ENCODE measurements at regions of chr21 and their contacts with region 1.

Region 1: DNA sequence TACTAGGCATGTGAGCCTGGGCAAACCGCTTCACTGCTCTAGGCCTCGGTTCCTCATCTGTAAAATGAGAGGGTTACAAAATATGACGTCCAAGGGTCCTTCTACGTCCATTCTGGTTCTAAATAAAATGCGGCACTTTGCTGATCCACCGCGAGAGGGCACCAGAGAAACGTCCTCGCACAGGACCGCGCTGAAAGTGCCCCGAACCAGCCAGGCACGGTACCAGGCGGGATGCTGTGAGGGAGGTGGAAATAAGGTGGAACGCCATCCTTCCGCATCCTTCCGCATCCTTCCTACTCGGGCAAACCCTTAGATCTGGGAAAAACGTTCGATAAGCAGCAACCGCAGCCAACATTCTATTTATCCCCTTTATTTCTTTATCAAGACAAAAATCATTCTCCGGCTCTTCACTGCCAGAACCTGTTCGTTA is 60.3 kb upstream of the KRTAP19-8 start:
- DNase-seq: peak; percentile 64 to 68 (median 64)
- H3K4me3 ChIP-seq: no peak overlapping the region
- H3K4me3 Mint-ChIP-seq: peak overlapping the region; percentile 56 to 82 (median 72)
- H3K27ac ChIP-seq: no peak overlapping the region
- H3K27ac Mint-ChIP-seq: peak overlapping the region; percentile 14 to 75 (median 41)
- H3K4me1 ChIP-seq: peaks cover 29% of the 10 kb centered on the region
- H3K4me1 Mint-ChIP-seq: peaks cover 25 to 36% (median 31%) of the 10 kb centered on the region in 4 donors
- H3K27me3 ChIP-seq: no peaks in the 10 kb centered on the region
- H3K27me3 Mint-ChIP-seq: peaks cover 2 to 4% of the 10 kb centered on the region in 2 donors

Region 2: DNA sequence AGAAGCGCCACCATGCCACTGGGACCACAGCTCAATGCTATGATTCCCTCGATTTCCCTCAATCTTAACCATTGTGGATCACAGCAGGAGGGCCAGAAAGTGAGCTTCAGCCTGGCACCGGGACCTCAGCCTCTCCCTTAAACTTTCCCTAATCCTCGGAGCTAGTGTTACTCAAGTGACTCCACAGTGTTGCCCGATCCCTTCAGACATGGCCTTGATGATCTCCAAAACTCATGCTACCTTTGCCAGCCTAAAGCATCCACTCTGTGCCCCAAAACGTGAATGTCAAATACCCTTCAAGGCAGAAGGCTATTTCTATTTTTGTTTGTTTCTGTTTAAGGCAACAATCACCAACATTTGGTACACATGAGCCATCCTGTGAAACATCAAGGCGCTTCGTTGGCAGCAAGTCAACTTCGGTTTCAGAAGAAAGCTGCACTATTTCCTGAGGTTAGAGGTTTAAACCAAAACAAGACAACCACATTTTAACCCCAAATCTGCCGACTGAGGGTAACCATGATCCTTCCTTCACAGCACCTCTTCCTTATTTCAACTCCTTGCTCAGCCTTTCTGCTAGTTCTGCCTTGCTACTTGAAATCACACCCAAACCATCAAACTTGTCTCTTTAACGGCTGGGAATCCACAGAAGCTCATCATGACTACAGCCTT is 34.1 kb after region 1 on chr21:
- CTCF ChIA-PET with region 1: interaction called, 12 read pairs
- POLR2A ChIA-PET with region 1: interaction called, 11 read pairs
- intact Hi-C with region 1: loop called (anchors 5 kb)
- DNase-seq: peak; percentile 83 to 93 (median 91)
- H3K4me3 ChIP-seq: peak overlapping the region in 1 of 2 donors; percentile 56
- H3K4me3 Mint-ChIP-seq: peak overlapping the region; percentile 66 to 94 (median 87)
- H3K27ac ChIP-seq: peak overlapping the region; percentile 29
- H3K27ac Mint-ChIP-seq: peak overlapping the region; percentile 85 to 95 (median 88)
- H3K4me1 ChIP-seq: peaks cover 47% of the 10 kb centered on the region
- H3K4me1 Mint-ChIP-seq: peaks cover 45 to 72% (median 53%) of the 10 kb centered on the region in 4 donors
- H3K27me3 ChIP-seq: no peaks in the 10 kb centered on the region
- H3K27me3 Mint-ChIP-seq: peaks cover 0 to 1% of the 10 kb centered on the region in 2 donors

Region 3: DNA sequence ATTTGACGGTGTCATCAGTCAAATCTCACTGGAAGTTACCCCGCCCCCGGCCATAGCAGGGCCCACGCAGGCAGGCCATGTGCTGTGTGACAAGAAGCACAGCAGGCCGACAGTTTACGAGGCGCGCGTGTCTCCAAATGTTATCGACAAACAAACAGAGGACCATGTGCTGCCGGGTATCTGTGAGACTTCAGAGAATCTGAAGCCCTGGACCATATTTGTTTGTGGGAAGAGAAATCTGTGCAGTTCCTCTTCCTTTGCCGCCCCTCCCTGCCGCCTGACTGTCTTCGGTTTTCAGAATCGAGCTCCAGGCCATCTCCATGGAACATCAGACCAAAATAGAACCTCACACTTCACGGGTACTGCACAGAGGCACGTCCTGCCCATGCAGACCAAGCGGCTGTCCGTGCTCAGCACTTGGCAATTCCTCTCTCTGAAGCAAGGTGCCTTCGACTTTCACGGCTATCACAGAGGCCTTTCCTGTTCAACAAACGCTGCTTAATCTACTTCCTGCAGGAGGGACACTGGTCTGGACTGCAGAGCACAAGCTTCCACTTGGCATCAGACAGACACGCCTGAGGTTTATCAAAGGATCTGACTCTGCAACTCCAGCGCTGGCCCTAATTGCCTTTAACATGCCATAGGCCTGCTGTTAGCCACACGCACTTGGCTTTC is 75.4 kb after region 1 on chr21:
- CTCF ChIA-PET with region 1: interaction called, 142 read pairs
- POLR2A ChIA-PET with region 1: interaction called, 3 read pairs
- intact Hi-C with region 1: no loop called
- DNase-seq: peak in 3 of 5 donors; percentile 27 to 70 (median 44)
- H3K4me3 ChIP-seq: no peak overlapping the region
- H3K4me3 Mint-ChIP-seq: peak overlapping the region; percentile 66 to 88 (median 80)
- H3K27ac ChIP-seq: peak overlapping the region; percentile 38
- H3K27ac Mint-ChIP-seq: peak overlapping the region; percentile 81 to 93 (median 90)
- H3K4me1 ChIP-seq: peaks cover 90% of the 10 kb centered on the region
- H3K4me1 Mint-ChIP-seq: peaks cover 55 to 96% (median 79%) of the 10 kb centered on the region in 4 donors
- H3K27me3 ChIP-seq: no peaks in the 10 kb centered on the region
- H3K27me3 Mint-ChIP-seq: no peaks in the 10 kb centered on the region

Region 4: DNA sequence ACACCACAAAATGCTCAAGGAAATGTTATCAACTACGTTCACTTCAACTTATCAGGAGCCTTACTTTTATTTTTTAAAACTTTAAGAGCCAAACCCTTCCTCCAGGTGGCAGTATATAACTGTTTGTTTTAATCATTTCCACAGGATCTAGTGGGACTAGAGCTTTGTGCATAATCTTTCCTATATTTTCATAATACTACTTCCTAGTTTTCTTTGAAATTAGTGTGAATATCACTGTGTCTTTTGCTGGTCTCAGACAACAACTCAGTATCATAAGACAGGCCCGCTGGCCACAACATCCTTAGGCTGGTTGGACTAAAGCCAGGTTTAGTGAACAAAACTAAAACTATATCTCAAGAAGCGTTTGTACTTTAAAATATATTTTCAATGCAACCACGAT is 100.0 kb after region 1 on chr21:
- CTCF ChIA-PET with region 1: interaction called, 17 read pairs
- POLR2A ChIA-PET with region 1: interaction called, 3 read pairs
- intact Hi-C with region 1: loop called (anchors 1 kb)
- DNase-seq: peak in 3 of 5 donors; percentile 37 to 62 (median 54)
- H3K4me3 ChIP-seq: no peak overlapping the region
- H3K4me3 Mint-ChIP-seq: peak overlapping the region in 1 of 8 donors; percentile 31
- H3K27ac ChIP-seq: no peak overlapping the region
- H3K27ac Mint-ChIP-seq: peak overlapping the region in 2 of 7 donors; percentile 4 to 12
- H3K4me1 ChIP-seq: peaks cover 19% of the 10 kb centered on the region
- H3K4me1 Mint-ChIP-seq: peaks cover 21 to 41% (median 27%) of the 10 kb centered on the region in 4 donors
- H3K27me3 ChIP-seq: no peaks in the 10 kb centered on the region
- H3K27me3 Mint-ChIP-seq: no peaks in the 10 kb centered on the region

Region 5: GRCh38 chr21:31580866-31581276 is 482.3 kb after region 1 on chr21:
- CTCF ChIA-PET with region 1: interaction called, 93 read pairs
- POLR2A ChIA-PET with region 1: no interaction called
- intact Hi-C with region 1: loop called (anchors 1 kb)
- DNase-seq: peak; percentile 58 to 72 (median 66)
- H3K4me3 ChIP-seq: no peak overlapping the region
- H3K4me3 Mint-ChIP-seq: no peak overlapping the region
- H3K27ac ChIP-seq: no peak overlapping the region
- H3K27ac Mint-ChIP-seq: no peak overlapping the region
- H3K4me1 ChIP-seq: no peaks in the 10 kb centered on the region
- H3K4me1 Mint-ChIP-seq: peaks cover 3 to 6% (median 4%) of the 10 kb centered on the region in 4 donors
- H3K27me3 ChIP-seq: no peaks in the 10 kb centered on the region
- H3K27me3 Mint-ChIP-seq: peaks cover 0 to 3% of the 10 kb centered on the region in 2 donors

Measured in CD4-positive, alpha-beta memory T cell (primary cell).